ENCODE measurements at regions of chr21 and their contacts with region 1.

Region 1: GRCh38 chr21:15775981-15776380 is 46.2 kb downstream of the USP25 start:
- DNase-seq: no peak
- H3K4me3 ChIP-seq: no peak overlapping the region
- H3K27ac ChIP-seq: no peak overlapping the region
- H3K4me1 ChIP-seq: peaks cover 12% of the 10 kb centered on the region
- H3K27me3 ChIP-seq: no peaks in the 10 kb centered on the region
- CTCF ChIP-seq: no peak
- POLR2A ChIP-seq: no peak

Region 2: GRCh38 chr21:15592271-15592860 is 183.6 kb before region 1 on chr21:
- CTCF ChIA-PET with region 1: no interaction called
- POLR2A ChIA-PET with region 1: no interaction called
- dilution Hi-C with region 1: no loop called
- intact Hi-C with region 1: no loop called
- DNase-seq: peak; percentile 65
- H3K4me3 ChIP-seq: no peak overlapping the region
- H3K27ac ChIP-seq: no peak overlapping the region
- H3K4me1 ChIP-seq: no peaks in the 10 kb centered on the region
- H3K27me3 ChIP-seq: peaks cover 0 to 3% of the 10 kb centered on the region in 2 experiments
- CTCF ChIP-seq: peak; percentile 28 to 39
- POLR2A ChIP-seq: no peak

Region 3: DNA sequence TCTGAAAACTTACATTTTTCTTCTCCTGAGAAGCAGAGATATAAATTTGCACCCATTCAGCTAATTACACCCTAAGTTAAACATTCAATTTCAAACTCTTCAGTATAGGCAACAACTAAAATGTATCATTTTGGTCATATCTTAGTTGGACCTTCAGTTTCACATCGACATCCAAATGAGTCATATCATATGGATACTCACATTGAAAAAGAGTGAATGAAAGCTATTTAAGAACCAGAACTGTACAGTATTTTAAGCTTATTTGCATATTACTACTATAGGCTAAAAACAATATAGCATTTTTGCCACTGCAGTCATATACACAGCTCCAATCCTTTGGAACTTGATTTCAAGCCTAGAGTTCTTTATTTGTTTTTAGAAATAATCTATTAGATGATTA is 12.6 kb before region 1 on chr21:
- CTCF ChIA-PET with region 1: interaction called, 13 read pairs
- POLR2A ChIA-PET with region 1: no interaction called
- dilution Hi-C with region 1: no loop called
- intact Hi-C with region 1: no loop called
- DNase-seq: no peak
- H3K4me3 ChIP-seq: no peak overlapping the region
- H3K27ac ChIP-seq: no peak overlapping the region
- H3K4me1 ChIP-seq: peaks cover 10% of the 10 kb centered on the region
- H3K27me3 ChIP-seq: no peaks in the 10 kb centered on the region
- CTCF ChIP-seq: no peak
- POLR2A ChIP-seq: no peak